Ascending aorta (tissue), 2 donors: ENCODE measurements at regions of chr14 and their contacts with region 1.

Region 1: DNA sequence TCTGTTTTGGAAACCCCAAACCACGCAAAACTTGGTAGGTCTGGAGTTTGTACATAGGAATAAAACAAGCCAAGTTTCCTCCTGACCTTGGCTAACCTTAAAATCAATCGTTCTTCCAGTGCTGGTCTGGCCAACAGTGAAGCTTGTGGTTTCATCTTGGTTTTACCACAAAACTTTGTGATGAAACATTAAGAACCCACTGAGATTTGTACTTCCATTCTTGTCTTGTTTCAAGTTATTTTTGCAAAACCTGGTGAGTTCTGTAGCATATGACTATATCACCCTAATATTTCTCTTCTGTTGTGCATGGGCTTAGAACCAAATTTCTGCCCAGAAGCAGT is 26.4 kb downstream of the SIX1 start:
- DNase-seq: no peak
- H3K4me3 ChIP-seq: no peak overlapping the region
- H3K27ac ChIP-seq: no peak overlapping the region
- H3K4me1 ChIP-seq: no peaks in the 10 kb centered on the region
- H3K27me3 ChIP-seq: no peaks in the 10 kb centered on the region
- CTCF ChIP-seq: no peak

Region 2: GRCh38 chr14:60648934-60649874 is 26.3 kb after region 1 on chr14 and contains the start of gene SIX1:
- intact Hi-C with region 1: no loop called
- DNase-seq: peak in 1 of 2 donors; percentile 76
- H3K4me3 ChIP-seq: peak within 1 kb of the TSS; percentile 59 to 71
- H3K27ac ChIP-seq: peak within 1 kb of the TSS; percentile 2 to 6
- H3K4me1 ChIP-seq: peaks cover 0 to 30% of the 10 kb centered on the region in 2 donors
- H3K27me3 ChIP-seq: peaks cover 30% of the 10 kb centered on the region
- CTCF ChIP-seq: no peak
- total RNA-seq, gene SIX1: 1.1 TPM

Region 3: GRCh38 chr14:61252369-61253063 is 629.6 kb after region 1 on chr14:
- intact Hi-C with region 1: loop called (anchors 1 kb)
- DNase-seq: peak; percentile 50 to 86
- H3K4me3 ChIP-seq: no peak overlapping the region
- H3K27ac ChIP-seq: no peak overlapping the region
- H3K4me1 ChIP-seq: no peaks in the 10 kb centered on the region
- H3K27me3 ChIP-seq: no peaks in the 10 kb centered on the region
- CTCF ChIP-seq: peak; percentile 72 to 82 (median 77)